Activated CD4-positive, alpha-beta T cell treated with anti-CD3 and anti-CD28 coated beads, Interleukin-2, amount 10 ng/mL, durations not matched to agents 24 days and 14 days (primary cell): ENCODE measurements at regions of chr20 and their contacts with region 1.

Region 1: DNA sequence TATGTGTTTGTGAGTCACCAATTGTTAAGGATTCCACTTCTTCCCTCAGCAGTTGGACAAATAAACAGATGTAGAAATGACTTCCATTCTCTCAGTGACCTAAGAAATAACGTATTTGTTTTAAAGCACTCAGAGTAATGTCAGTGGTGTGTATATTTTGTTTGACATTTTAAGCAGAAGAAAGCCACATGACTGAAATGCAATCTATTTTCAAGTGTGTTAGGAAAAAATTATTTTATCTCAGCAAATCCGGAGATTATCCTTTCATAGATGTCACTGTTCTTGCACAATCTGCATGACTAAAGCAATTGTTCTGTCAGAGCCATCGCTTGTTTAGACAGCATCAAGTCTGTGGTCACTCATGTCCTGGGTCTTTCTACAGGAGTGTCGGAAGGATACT is 77.1 kb downstream of the JAG1 start:
- DNase-seq: no peak
- H3K4me3 Mint-ChIP-seq: no peak overlapping the region
- H3K27ac Mint-ChIP-seq: no peak overlapping the region
- H3K4me1 Mint-ChIP-seq: peaks cover 15% of the 10 kb centered on the region
- H3K27me3 Mint-ChIP-seq: no peaks in the 10 kb centered on the region

Region 2: DNA sequence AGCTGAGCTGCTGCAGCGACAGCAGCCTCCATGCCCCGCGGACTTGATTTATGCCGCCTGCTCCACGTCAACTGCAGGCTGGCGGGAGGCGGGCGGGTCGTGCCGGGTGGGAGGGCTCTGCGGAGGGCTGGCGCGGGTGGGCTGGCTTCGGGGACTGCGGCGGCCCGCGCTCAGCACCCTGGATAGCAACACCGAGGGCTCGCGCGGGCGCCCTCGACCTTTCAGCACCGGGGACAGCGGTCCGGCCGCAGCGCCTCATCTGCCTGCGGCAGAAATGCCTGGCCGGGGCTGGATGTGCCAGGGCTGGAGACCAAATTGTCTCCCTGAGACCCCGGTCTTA is 377.3 kb before region 1 on chr20:
- intact Hi-C with region 1: loop called (anchors 5 kb)
- DNase-seq: peak; percentile 93
- H3K4me3 Mint-ChIP-seq: peak overlapping the region; percentile 66
- H3K27ac Mint-ChIP-seq: peak overlapping the region; percentile 40
- H3K4me1 Mint-ChIP-seq: peaks cover 15% of the 10 kb centered on the region
- H3K27me3 Mint-ChIP-seq: peaks cover 22% of the 10 kb centered on the region

Region 3: DNA sequence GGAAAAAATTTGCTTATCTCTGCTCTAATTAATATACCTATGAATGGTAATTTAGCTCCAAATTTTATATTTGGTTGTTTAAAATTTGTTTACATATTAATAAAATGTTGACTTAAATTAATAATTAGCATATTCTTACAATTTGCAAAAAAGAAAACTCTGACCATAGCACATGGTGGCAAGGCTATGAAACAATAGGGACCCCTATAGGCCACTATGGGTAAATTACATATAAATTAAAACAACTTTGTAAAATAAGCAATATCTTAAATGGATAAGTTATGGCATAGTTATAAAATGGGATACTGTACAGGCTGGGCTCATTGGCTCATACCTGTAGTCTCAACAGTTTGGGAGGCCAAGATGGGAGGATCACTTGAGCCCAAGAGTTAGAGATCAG is 238.8 kb before region 1 on chr20:
- intact Hi-C with region 1: loop called (anchors 2 kb)
- DNase-seq: no peak
- H3K4me3 Mint-ChIP-seq: no peak overlapping the region
- H3K27ac Mint-ChIP-seq: no peak overlapping the region
- H3K4me1 Mint-ChIP-seq: peaks cover 4% of the 10 kb centered on the region
- H3K27me3 Mint-ChIP-seq: peaks cover 8% of the 10 kb centered on the region

Region 4: GRCh38 chr20:10511509-10512251 is 85.0 kb before region 1 on chr20:
- intact Hi-C with region 1: loop called (anchors 1 kb)
- DNase-seq: peak; percentile 90
- H3K4me3 Mint-ChIP-seq: peak overlapping the region; percentile 50
- H3K27ac Mint-ChIP-seq: peak overlapping the region; percentile 82
- H3K4me1 Mint-ChIP-seq: peaks cover 38% of the 10 kb centered on the region
- H3K27me3 Mint-ChIP-seq: peaks cover 3% of the 10 kb centered on the region

Region 5: GRCh38 chr20:10578607-10579006 is 18.1 kb before region 1 on chr20:
- intact Hi-C with region 1: loop called (anchors 2 kb)
- DNase-seq: no peak
- H3K4me3 Mint-ChIP-seq: no peak overlapping the region
- H3K27ac Mint-ChIP-seq: no peak overlapping the region
- H3K4me1 Mint-ChIP-seq: peaks cover 15% of the 10 kb centered on the region
- H3K27me3 Mint-ChIP-seq: no peaks in the 10 kb centered on the region

Region 6: GRCh38 chr20:10806539-10806938 is 209.8 kb after region 1 on chr20:
- intact Hi-C with region 1: no loop called
- DNase-seq: no peak
- H3K4me3 Mint-ChIP-seq: no peak overlapping the region
- H3K27ac Mint-ChIP-seq: no peak overlapping the region
- H3K4me1 Mint-ChIP-seq: no peaks in the 10 kb centered on the region
- H3K27me3 Mint-ChIP-seq: no peaks in the 10 kb centered on the region